ENCODE measurements at regions of chr3 and their contacts with region 1.

Region 1: GRCh38 chr3:25033407-25034029 is 394.5 kb upstream of the RARB start:
- DNase-seq: peak; percentile 35
- H3K4me3 ChIP-seq: no peak overlapping the region
- H3K27ac ChIP-seq: no peak overlapping the region
- H3K4me1 ChIP-seq: no peaks in the 10 kb centered on the region
- H3K27me3 ChIP-seq: no peaks in the 10 kb centered on the region
- CTCF ChIP-seq: peak; percentile 58 to 63

Region 2: GRCh38 chr3:24793896-24794295 is 239.6 kb before region 1 on chr3:
- CTCF ChIA-PET with region 1: no interaction called
- dilution Hi-C with region 1: no loop called
- in situ Hi-C with region 1: no loop called
- intact Hi-C with region 1: no loop called
- DNase-seq: no peak
- H3K4me3 ChIP-seq: no peak overlapping the region
- H3K27ac ChIP-seq: no peak overlapping the region
- H3K4me1 ChIP-seq: no peaks in the 10 kb centered on the region
- H3K27me3 ChIP-seq: no peaks in the 10 kb centered on the region
- CTCF ChIP-seq: no peak

Region 3: DNA sequence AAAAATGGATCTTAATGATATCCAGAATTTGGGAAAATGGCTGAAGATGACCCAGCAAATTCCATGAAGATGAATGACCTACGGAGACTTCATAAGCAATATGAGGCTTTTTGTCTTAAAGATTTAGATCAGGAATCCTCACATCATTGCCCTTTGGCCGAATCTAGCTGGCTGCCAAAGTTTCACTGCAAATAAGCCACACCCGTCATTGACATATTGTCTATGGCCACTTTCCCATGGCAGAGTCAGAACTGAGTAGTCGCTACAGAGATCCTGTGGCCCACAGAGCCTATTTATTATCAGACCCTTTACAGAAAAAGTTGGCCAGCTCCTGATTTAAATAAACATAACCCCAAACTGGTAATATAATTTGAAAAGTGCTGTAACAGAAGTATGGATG is 87.1 kb after region 1 on chr3:
- CTCF ChIA-PET with region 1: interaction called, 16 read pairs
- dilution Hi-C with region 1: no loop called
- in situ Hi-C with region 1: no loop called
- intact Hi-C with region 1: no loop called
- DNase-seq: no peak
- H3K4me3 ChIP-seq: no peak overlapping the region
- H3K27ac ChIP-seq: no peak overlapping the region
- H3K4me1 ChIP-seq: no peaks in the 10 kb centered on the region
- H3K27me3 ChIP-seq: no peaks in the 10 kb centered on the region
- CTCF ChIP-seq: no peak

Region 4: DNA sequence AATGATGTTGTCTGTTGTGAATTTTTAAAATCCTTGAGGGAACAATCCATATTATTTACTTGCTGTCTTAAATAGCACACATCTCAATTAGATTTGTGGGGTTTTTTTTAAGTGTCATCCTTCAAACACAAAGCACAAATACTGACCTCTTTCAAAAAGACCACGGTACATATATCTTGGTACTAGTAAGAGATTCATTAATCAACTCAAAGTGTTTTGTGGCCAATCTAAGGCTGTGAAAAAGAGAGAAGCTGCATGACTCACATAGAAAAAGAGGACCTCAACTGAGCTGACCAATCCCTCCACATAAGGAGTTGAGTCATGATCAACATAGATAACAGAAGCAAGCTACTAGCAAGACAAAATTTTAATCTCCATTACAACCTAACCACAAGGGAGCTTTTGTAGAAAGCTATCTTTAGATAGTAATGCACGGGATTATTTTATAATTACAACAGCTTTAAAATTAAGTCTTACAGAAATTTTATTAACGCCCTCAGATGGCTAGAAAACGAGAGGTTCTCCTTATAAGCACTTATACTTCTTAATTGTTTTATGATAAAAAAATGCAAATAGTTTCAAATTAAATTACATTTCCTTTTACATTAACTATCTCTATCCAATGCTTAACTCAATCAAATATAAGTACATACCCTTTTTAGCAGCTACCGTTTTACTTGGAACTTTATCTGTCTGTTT is 570.7 kb after region 1 on chr3:
- CTCF ChIA-PET with region 1: no interaction called
- dilution Hi-C with region 1: no loop called
- in situ Hi-C with region 1: no loop called
- intact Hi-C with region 1: no loop called
- DNase-seq: peak; percentile 71
- H3K4me3 ChIP-seq: no peak overlapping the region
- H3K27ac ChIP-seq: no peak overlapping the region
- H3K4me1 ChIP-seq: peaks cover 9% of the 10 kb centered on the region
- H3K27me3 ChIP-seq: no peaks in the 10 kb centered on the region
- CTCF ChIP-seq: no peak